Activated CD4-positive, alpha-beta memory T cell treated with anti-CD3 and anti-CD28 coated beads for 36 hours (primary cell): ENCODE measurements at regions of chr12 and their contacts with region 1.

Region 1: DNA sequence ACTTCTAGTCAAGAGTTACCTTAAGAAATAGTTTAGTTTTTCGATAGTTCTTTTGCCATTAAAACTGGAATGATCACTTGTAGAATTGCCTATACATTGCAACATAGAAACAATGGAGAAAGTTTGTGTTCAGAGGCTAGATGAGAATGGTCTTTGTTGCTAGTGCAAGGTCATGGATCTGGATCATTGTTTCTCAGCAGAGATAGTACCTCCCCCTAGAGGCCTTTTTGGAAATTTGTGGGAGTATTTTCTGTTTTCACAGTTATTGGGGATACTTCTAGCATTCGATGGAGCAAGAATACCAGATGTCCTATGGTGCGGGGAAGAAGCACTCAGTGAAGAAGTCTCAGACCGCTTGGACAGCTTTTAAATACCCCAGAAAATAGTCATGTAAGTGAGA is 138.8 kb upstream of the HMGA2 start:
- DNase-seq: no peak
- H3K4me3 Mint-ChIP-seq: no peak overlapping the region
- H3K27ac Mint-ChIP-seq: no peak overlapping the region
- H3K4me1 Mint-ChIP-seq: no peaks in the 10 kb centered on the region
- H3K27me3 Mint-ChIP-seq: peaks cover 3% of the 10 kb centered on the region

Region 2: DNA sequence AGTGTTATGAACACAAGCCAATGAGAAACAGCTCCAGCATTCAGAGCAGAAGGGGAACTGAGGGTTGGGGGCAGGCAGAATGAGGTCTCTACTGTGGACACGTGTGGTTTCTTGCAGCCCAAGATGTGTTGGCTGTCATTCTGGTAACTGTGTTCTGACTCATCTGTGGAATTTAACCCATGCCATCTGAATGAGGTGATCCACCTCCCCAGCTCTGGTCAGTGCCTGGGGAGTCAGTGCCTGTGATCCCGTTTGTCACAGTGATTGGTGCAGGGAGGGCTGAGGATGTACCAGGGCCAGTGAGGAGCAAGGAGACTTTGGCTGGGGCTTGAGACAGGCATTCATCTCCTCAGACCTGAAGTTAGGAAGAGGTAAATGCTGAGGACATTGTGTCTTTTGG is 190.3 kb before region 1 on chr12:
- CTCF ChIA-PET with region 1: no interaction called
- POLR2A ChIA-PET with region 1: no interaction called
- intact Hi-C with region 1: no loop called
- DNase-seq: no peak
- H3K4me3 Mint-ChIP-seq: no peak overlapping the region
- H3K27ac Mint-ChIP-seq: no peak overlapping the region
- H3K4me1 Mint-ChIP-seq: no peaks in the 10 kb centered on the region
- H3K27me3 Mint-ChIP-seq: peaks cover 3% of the 10 kb centered on the region

Region 3: DNA sequence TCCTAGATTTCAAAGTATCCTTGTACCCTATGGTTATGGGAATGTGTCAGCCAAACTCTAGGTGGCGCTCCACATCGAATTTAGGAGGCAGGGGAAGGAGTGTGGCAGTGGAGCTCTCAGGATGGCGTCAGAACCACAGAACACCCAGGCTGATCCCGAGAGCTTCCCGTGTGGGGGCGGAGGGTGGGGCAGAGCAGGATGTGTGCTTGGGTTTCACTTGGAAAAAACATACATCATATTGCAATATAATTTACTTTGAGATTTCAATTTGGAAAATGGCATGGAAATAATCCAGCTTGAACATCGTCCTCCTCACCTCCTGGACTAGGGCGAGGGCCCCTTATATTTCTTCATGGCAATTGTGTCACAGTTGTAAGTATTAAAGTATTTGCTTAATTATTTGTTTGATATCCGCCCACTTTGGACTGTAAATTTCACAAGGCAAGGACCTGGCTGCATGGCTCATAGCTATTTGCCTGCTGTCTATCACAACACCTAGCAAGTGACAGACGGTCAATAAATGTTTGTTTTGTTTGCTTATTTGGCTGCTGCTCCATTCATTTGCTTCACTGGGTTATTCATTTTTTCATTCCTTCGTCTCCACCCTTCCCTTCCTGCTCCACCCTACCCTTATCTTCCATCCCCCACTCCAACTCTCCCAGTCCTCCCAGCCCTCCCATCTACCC is 82.8 kb before region 1 on chr12:
- CTCF ChIA-PET with region 1: no interaction called
- POLR2A ChIA-PET with region 1: no interaction called
- intact Hi-C with region 1: loop called (anchors 10 kb)
- DNase-seq: peak; percentile 56
- H3K4me3 Mint-ChIP-seq: no peak overlapping the region
- H3K27ac Mint-ChIP-seq: no peak overlapping the region
- H3K4me1 Mint-ChIP-seq: peaks cover 1% of the 10 kb centered on the region
- H3K27me3 Mint-ChIP-seq: peaks cover 5% of the 10 kb centered on the region